ENCODE measurements at regions of chr13 and their contacts with region 1.

Region 1: DNA sequence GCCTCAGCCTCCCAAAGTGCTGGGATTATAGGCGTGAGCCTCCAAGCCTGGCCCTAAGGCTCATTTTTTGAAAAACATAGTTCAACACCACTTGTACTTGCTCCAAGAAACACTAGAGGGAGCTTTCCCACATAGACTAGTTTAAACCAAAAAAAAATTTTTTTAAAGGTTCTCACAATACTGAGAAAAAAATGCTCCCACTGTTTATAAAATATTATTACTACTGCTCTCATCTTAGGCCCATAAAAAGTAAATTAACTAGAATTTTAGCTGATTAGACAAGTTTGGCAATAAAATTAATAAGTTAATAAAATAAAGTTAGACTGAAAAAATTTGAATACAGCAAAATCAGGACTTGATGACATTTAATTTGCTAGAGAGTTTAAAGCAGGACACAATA is 109.5 kb downstream of the TBC1D4 start:
- DNase-seq: no peak
- H3K4me3 ChIP-seq: no peak overlapping the region
- H3K27ac ChIP-seq: no peak overlapping the region
- H3K4me1 ChIP-seq: peaks cover 0 to 5% (median 1%) of the 10 kb centered on the region in 4 experiments; a peak in 5 of 7 replicates
- H3K27me3 ChIP-seq: no peaks in the 10 kb centered on the region
- CTCF ChIP-seq: peak in 2 of 3 experiments; percentile 33 to 38; a peak in 2 of 4 replicates
- EP300 ChIP-seq: no peak
- POLR2A ChIP-seq: no peak
- RAD21 ChIP-seq: peak; percentile 42 to 43

Region 2: DNA sequence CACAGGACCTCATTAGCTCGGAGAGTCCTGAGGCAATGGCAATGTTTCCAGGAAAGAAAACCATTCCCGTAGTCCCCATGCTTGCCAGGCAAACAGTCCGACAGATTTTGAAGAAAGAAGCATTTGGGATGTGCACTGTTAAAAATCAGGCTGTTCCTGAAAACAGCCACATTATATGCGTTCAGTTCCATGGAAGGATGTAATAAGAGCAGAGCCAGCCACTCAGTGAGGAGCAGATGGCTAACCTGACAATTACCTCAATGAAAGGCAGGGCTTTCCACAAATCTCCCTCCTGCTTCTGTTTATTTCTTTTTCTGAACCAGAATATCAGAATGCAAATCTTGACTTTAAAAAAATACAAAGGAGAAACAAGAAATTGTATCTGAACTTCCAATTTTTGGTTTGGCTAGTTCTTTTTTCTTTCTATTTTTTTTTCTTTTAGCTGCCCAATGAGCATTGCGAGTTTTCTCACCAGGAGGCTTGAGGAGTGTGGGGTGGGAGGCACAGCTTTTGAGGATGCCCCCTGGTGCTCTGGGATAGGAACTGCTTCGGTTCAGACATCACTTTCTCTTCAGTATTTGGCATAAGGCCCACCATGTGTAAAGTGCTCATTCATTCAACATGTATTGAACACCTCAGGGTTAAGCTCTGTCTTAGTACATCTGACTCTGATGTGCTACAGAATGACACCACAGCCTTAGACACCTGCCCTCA is 14.8 kb before region 1 on chr13:
- CTCF ChIA-PET with region 1: interaction called, 35 read pairs
- POLR2A ChIA-PET with region 1: no interaction called
- DNase-seq: peak; percentile 17 to 53
- H3K4me3 ChIP-seq: no peak overlapping the region
- H3K27ac ChIP-seq: no peak overlapping the region
- H3K4me1 ChIP-seq: peaks cover 0 to 6% (median 0%) of the 10 kb centered on the region in 4 experiments; a peak in 1 of 7 replicates
- H3K27me3 ChIP-seq: no peaks in the 10 kb centered on the region
- CTCF ChIP-seq: peak; percentile 64 to 82 (median 69)
- EP300 ChIP-seq: no peak
- POLR2A ChIP-seq: no peak
- RAD21 ChIP-seq: peak; percentile 37 to 50

Region 3: GRCh38 chr13:75384879-75385707 is 12.6 kb after region 1 on chr13:
- CTCF ChIA-PET with region 1: interaction called, 10 read pairs
- POLR2A ChIA-PET with region 1: no interaction called
- DNase-seq: no peak
- H3K4me3 ChIP-seq: no peak overlapping the region
- H3K27ac ChIP-seq: no peak overlapping the region
- H3K4me1 ChIP-seq: no peaks in the 10 kb centered on the region
- H3K27me3 ChIP-seq: no peaks in the 10 kb centered on the region
- CTCF ChIP-seq: no peak
- EP300 ChIP-seq: no peak
- POLR2A ChIP-seq: no peak
- RAD21 ChIP-seq: no peak

Region 4: DNA sequence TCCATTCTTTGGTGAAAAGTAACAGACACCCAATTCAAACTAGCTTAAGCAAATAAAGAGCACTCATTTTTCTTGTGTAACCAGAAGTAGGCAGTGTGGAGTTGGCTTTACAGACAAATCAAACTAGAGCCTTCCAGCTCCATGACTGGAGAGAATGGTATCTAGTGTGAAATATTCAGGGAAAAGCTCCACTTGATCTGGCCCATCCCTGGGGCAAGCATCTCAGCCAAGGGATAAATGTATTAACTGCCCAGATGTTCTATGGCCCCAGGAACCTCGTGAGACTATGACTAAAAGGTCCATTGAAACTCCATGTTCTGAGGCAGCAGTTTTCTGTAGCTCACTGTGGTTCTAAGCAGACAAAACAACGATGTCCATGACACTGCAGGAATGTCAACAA is 59.5 kb after region 1 on chr13:
- CTCF ChIA-PET with region 1: interaction called, 11 read pairs
- POLR2A ChIA-PET with region 1: no interaction called
- DNase-seq: no peak
- H3K4me3 ChIP-seq: no peak overlapping the region
- H3K27ac ChIP-seq: no peak overlapping the region
- H3K4me1 ChIP-seq: no peaks in the 10 kb centered on the region
- H3K27me3 ChIP-seq: no peaks in the 10 kb centered on the region
- CTCF ChIP-seq: peak in 1 of 3 experiments; percentile 27; a peak in 2 of 4 replicates
- EP300 ChIP-seq: no peak
- POLR2A ChIP-seq: no peak
- RAD21 ChIP-seq: peak in 1 of 2 experiments; percentile 24; a peak in 1 of 4 replicates

Measured in H1 (cell line).